ENCODE measurements at regions of chr20 and their contacts with region 1.

Region 1: GRCh38 chr20:16476032-16476431 is 97.2 kb downstream of the KIF16B start:
- DNase-seq: peak; percentile 45
- H3K4me3 ChIP-seq: no peak overlapping the region
- H3K27ac ChIP-seq: no peak overlapping the region; a peak in 1 of 4 replicates
- H3K4me1 ChIP-seq: peaks cover 0 to 10% of the 10 kb centered on the region in 2 experiments; a peak in 2 of 4 replicates
- H3K27me3 ChIP-seq: no peaks in the 10 kb centered on the region
- CTCF ChIP-seq: peak; percentile 79
- EP300 ChIP-seq: no peak
- RAD21 ChIP-seq: peak; percentile 89

Region 2: DNA sequence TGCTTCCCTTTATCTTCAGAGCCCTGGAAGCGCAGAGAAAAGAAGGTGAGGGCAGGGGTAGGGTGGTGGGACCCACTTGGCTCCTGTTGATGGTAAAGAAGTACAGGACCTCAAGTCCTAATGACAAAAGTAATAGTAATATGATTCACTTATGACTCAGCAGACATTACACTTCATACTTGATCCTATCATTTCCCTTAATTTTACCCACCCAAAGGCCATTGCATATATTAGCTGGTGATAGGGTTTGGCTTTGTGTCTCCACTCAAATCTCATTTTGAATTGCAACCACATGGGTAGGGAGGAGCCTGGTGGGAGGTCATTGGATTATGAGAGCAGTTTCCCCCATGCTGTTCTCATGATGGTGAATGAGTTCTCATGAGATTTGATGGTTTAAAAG is 783.5 kb before region 1 on chr20:
- CTCF ChIA-PET with region 1: no interaction called
- POLR2A ChIA-PET with region 1: no interaction called
- DNase-seq: no peak
- H3K4me3 ChIP-seq: no peak overlapping the region
- H3K27ac ChIP-seq: no peak overlapping the region
- H3K4me1 ChIP-seq: no peaks in the 10 kb centered on the region
- H3K27me3 ChIP-seq: no peaks in the 10 kb centered on the region
- CTCF ChIP-seq: no peak
- EP300 ChIP-seq: no peak
- RAD21 ChIP-seq: no peak

Region 3: DNA sequence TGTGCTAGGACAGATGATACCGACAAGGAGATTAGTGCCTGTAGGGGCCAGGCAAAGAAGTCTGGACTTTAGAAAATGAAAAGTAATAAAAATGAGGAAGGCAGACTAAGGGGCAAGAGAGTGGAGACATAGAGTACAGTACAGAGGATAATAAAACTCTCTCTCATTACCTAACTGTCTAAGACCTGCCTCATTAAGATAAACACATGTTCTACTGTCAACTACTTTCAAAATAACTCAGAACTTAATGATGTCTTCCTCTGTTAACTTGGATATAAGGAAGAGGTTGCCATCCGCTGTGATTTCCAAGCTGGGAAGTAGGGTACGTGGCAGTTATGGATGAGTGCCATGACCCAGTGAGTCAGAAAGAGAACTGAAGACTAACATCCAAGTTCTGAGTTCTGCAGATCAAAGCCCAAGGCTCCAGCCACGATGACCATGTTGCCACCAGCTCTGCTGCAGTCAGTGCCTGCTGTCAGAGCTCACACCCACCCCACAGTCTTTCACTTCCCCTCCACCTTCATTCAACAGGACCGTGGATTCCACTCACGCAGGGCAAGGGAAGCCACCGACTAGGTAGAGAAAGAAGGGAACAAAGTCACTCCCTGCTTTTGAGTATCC is 15.4 kb after region 1 on chr20:
- CTCF ChIA-PET with region 1: interaction called, 20 read pairs
- POLR2A ChIA-PET with region 1: no interaction called
- DNase-seq: no peak
- H3K4me3 ChIP-seq: no peak overlapping the region
- H3K27ac ChIP-seq: no peak overlapping the region
- H3K4me1 ChIP-seq: no peaks in the 10 kb centered on the region; a peak in 1 of 4 replicates
- H3K27me3 ChIP-seq: no peaks in the 10 kb centered on the region
- CTCF ChIP-seq: no peak
- EP300 ChIP-seq: no peak
- RAD21 ChIP-seq: no peak

Measured in SK-N-SH (cell line).